IMR-90 (cell line): ENCODE measurements at regions of chr2 and their contacts with region 1.

Region 1: GRCh38 chr2:61538200-61538919 is at the start of gene XPO1:
- DNase-seq: peak; percentile 99
- ATAC-seq: peak; percentile 88
- H3K4me3 ChIP-seq: peak within 1 kb of the TSS; percentile 83
- H3K27ac ChIP-seq: peak within 1 kb of the TSS; percentile 89
- H3K4me1 ChIP-seq: peaks cover 4% of the 10 kb centered on the region
- H3K27me3 ChIP-seq: no peaks in the 10 kb centered on the region
- CTCF ChIP-seq: no peak
- POLR2A ChIP-seq: peak; percentile 76
- RAD21 ChIP-seq: no peak
- total RNA-seq, gene XPO1: 104 and 192 TPM in 2 replicates

Region 2: GRCh38 chr2:61074100-61074499 is 464.3 kb before region 1 on chr2:
- CTCF ChIA-PET with region 1: no interaction called
- POLR2A ChIA-PET with region 1: no interaction called
- dilution Hi-C with region 1: no loop called
- in situ Hi-C with region 1: no loop called
- intact Hi-C with region 1: no loop called
- DNase-seq: no peak
- ATAC-seq: no peak
- H3K4me3 ChIP-seq: no peak overlapping the region
- H3K27ac ChIP-seq: no peak overlapping the region
- H3K4me1 ChIP-seq: no peaks in the 10 kb centered on the region
- H3K27me3 ChIP-seq: no peaks in the 10 kb centered on the region
- CTCF ChIP-seq: no peak
- POLR2A ChIP-seq: no peak
- RAD21 ChIP-seq: no peak

Region 3: GRCh38 chr2:61272421-61273070 is 265.8 kb before region 1 on chr2:
- CTCF ChIA-PET with region 1: no interaction called
- POLR2A ChIA-PET with region 1: no interaction called
- dilution Hi-C with region 1: no loop called
- in situ Hi-C with region 1: no loop called
- intact Hi-C with region 1: no loop called
- DNase-seq: peak; percentile 20
- ATAC-seq: peak; percentile 32; the same call in 1 of the 2 replicates
- H3K4me3 ChIP-seq: no peak overlapping the region
- H3K27ac ChIP-seq: no peak overlapping the region
- H3K4me1 ChIP-seq: no peaks in the 10 kb centered on the region
- H3K27me3 ChIP-seq: no peaks in the 10 kb centered on the region
- CTCF ChIP-seq: no peak
- POLR2A ChIP-seq: no peak
- RAD21 ChIP-seq: no peak

Region 4: DNA sequence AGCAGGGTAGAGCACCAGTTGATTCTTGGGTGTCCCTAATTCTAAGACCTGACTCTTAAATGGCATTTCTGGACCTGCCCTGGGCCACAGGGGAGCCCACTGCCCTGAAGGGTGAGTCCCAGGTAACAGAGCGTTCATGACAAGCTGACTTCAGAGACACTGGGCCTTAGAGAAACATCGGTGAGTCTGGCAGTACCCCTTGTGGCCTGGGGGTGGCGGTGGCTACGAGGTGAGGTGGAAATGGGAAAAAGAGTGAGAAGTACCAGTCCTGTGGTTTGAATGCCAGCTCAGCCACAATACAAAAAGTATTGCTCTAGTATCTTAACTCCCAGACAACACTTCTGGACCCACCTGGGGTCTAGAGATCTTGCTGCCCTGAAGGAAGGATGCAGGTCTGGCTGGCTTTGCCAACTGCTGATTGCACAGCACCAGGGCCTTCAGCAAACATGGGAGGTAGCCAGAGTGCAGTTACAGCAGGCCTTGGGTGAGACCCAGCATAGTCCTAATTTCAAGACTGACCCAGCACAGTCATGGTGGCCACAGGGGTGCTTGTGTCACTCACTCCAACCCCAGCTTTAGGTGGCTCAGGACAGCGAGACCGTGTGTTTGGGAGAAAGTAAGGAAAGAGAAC is 112.0 kb before region 1 on chr2:
- CTCF ChIA-PET with region 1: no interaction called
- POLR2A ChIA-PET with region 1: no interaction called
- dilution Hi-C with region 1: no loop called
- in situ Hi-C with region 1: no loop called
- intact Hi-C with region 1: no loop called
- DNase-seq: no peak
- ATAC-seq: no peak
- H3K4me3 ChIP-seq: no peak overlapping the region
- H3K27ac ChIP-seq: no peak overlapping the region
- H3K4me1 ChIP-seq: peaks cover 2% of the 10 kb centered on the region; the same call in 1 of the 2 replicates
- H3K27me3 ChIP-seq: no peaks in the 10 kb centered on the region
- CTCF ChIP-seq: peak; percentile 28; the same call in 1 of the 2 replicates
- POLR2A ChIP-seq: no peak
- RAD21 ChIP-seq: peak; percentile 38

Region 5: GRCh38 chr2:61493523-61493942 is 44.8 kb before region 1 on chr2:
- CTCF ChIA-PET with region 1: no interaction called
- POLR2A ChIA-PET with region 1: no interaction called
- dilution Hi-C with region 1: no loop called
- in situ Hi-C with region 1: no loop called
- intact Hi-C with region 1: loop called (anchors 2 kb)
- DNase-seq: peak; percentile 40
- ATAC-seq: no peak
- H3K4me3 ChIP-seq: no peak overlapping the region
- H3K27ac ChIP-seq: no peak overlapping the region
- H3K4me1 ChIP-seq: peaks cover 9% of the 10 kb centered on the region
- H3K27me3 ChIP-seq: no peaks in the 10 kb centered on the region
- CTCF ChIP-seq: no peak
- POLR2A ChIP-seq: no peak
- RAD21 ChIP-seq: no peak

Region 6: GRCh38 chr2:61639721-61640120 is 101.4 kb after region 1 on chr2:
- CTCF ChIA-PET with region 1: no interaction called
- POLR2A ChIA-PET with region 1: no interaction called
- dilution Hi-C with region 1: no loop called
- in situ Hi-C with region 1: no loop called
- intact Hi-C with region 1: loop called (anchors 5 kb)
- DNase-seq: no peak
- ATAC-seq: no peak
- H3K4me3 ChIP-seq: no peak overlapping the region
- H3K27ac ChIP-seq: no peak overlapping the region
- H3K4me1 ChIP-seq: peaks cover 10% of the 10 kb centered on the region
- H3K27me3 ChIP-seq: no peaks in the 10 kb centered on the region
- CTCF ChIP-seq: no peak
- POLR2A ChIP-seq: no peak
- RAD21 ChIP-seq: no peak

Region 7: GRCh38 chr2:61759718-61760117 is 221.4 kb after region 1 on chr2:
- CTCF ChIA-PET with region 1: no interaction called
- POLR2A ChIA-PET with region 1: no interaction called
- dilution Hi-C with region 1: no loop called
- in situ Hi-C with region 1: no loop called
- intact Hi-C with region 1: loop called (anchors 2 kb)
- DNase-seq: peak; percentile 88
- ATAC-seq: no peak
- H3K4me3 ChIP-seq: no peak overlapping the region
- H3K27ac ChIP-seq: peak overlapping the region; percentile 16; the same call in 1 of the 2 replicates
- H3K4me1 ChIP-seq: 0 out of 2 replicates have a peak, but pooled peaks cover 2% of the 10 kb centered on the region
- H3K27me3 ChIP-seq: no peaks in the 10 kb centered on the region
- CTCF ChIP-seq: no peak
- POLR2A ChIP-seq: no peak
- RAD21 ChIP-seq: no peak

Region 8: DNA sequence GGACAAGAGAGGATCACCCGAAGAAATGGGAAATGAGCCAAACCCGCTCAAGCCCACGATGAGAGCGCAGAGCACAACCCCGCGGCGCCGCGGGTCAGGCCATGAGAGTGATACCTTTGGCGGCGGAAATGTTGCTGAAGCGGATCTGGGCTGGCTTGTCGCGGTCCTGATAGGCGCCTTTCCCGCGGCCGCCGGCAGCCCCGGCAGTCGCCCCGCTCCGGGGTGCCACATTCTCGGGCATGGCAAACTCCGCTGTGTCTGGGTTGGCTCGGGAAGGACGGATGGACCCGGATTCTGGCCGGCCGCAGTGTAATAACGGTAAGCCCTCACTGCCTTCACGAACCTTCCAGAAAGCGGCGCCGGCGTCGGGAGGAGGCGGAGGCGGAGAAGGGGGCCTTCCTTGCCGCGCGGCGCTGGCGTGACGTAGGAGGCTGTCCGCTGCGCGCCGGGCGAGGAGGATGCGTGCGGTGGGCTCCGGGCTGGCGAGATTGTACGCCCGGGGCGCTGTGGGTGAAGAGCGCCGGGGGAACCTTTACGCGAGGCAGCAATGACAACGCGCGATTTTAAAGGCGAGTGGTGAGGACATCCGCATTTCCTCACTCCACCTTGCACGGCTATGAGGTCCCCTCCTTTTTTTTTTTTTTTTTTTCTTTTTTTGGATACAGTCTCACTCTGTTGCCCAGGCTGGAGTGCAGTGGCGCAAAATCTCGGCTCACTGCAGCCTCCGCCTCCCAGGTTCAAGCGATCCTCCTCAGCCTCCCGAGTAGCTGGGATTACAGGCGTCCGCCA is 350.1 kb after region 1 on chr2 and contains the start of gene CCT4:
- CTCF ChIA-PET with region 1: no interaction called
- POLR2A ChIA-PET with region 1: no interaction called
- dilution Hi-C with region 1: no loop called
- in situ Hi-C with region 1: no loop called
- intact Hi-C with region 1: loop called (anchors 10 kb)
- DNase-seq: peak; percentile 71
- ATAC-seq: peak; percentile 96
- H3K4me3 ChIP-seq: peak within 1 kb of the TSS; percentile 90
- H3K27ac ChIP-seq: peak within 1 kb of the TSS; percentile 91
- H3K4me1 ChIP-seq: peaks cover 3% of the 10 kb centered on the region
- H3K27me3 ChIP-seq: no peaks in the 10 kb centered on the region
- CTCF ChIP-seq: 0 out of 2 replicates have a peak, but pooled peaks have one; percentile 3
- POLR2A ChIP-seq: peak; percentile 97
- RAD21 ChIP-seq: no peak
- total RNA-seq, gene CCT4: 187 and 233 TPM in 2 replicates